Aorta (tissue), 5 donors: ENCODE measurements at regions of chr6 and their contacts with region 1.

Region 1: DNA sequence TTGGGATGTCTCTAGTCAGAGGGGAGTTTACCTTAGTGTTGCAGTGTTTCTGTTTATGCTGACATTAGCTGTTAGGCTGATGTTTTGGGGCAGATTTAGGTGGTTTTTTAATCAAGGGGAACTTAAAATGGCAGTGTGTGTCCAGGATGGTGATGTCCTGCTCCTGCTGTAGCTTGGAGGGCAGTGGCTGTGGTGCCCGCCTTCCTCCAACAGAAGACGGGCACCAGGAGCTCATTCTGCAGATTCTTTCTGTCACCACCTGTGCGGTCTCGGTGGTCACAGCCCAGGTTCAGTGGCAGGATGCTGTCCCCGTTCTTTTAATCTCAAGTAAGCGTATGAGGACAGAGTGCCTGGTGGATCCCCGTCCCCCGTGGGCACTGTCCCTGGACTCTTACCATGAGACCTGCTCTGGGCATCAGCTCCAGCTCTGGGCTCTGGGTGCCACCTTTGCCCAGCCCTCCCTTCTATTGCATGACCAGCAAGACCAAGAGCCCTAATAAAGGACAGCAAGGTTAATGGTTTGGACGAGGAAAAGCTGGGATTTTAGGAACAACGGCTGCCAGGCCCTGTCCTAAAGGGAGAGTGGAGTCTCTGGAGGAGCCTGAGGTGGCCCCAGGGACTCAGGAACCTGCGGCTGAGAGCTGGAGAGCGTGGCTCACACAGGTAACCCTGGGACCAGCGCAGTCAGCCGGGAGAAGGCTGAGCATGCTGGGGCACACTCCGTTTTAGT is 217.3 kb downstream of the ERMARD start:
- DNase-seq: peak in 1 of 2 donors; percentile 57
- ATAC-seq: no peak
- H3K4me3 ChIP-seq: no peak overlapping the region
- H3K27ac ChIP-seq: no peak overlapping the region
- H3K4me1 ChIP-seq: no peaks in the 10 kb centered on the region
- H3K27me3 ChIP-seq: no peaks in the 10 kb centered on the region

Region 2: GRCh38 chr6:169993861-169994481 is 25.3 kb after region 1 on chr6:
- intact Hi-C with region 1: loop called in 1 of 2 experiments (anchors 1 kb)
- DNase-seq: peak in 1 of 2 donors; percentile 73
- ATAC-seq: no peak
- H3K4me3 ChIP-seq: no peak overlapping the region
- H3K27ac ChIP-seq: no peak overlapping the region
- H3K4me1 ChIP-seq: no peaks in the 10 kb centered on the region
- H3K27me3 ChIP-seq: no peaks in the 10 kb centered on the region